Breast epithelium (tissue), 4 donors: ENCODE measurements at regions of chr14 and their contacts with region 1.

Region 1: DNA sequence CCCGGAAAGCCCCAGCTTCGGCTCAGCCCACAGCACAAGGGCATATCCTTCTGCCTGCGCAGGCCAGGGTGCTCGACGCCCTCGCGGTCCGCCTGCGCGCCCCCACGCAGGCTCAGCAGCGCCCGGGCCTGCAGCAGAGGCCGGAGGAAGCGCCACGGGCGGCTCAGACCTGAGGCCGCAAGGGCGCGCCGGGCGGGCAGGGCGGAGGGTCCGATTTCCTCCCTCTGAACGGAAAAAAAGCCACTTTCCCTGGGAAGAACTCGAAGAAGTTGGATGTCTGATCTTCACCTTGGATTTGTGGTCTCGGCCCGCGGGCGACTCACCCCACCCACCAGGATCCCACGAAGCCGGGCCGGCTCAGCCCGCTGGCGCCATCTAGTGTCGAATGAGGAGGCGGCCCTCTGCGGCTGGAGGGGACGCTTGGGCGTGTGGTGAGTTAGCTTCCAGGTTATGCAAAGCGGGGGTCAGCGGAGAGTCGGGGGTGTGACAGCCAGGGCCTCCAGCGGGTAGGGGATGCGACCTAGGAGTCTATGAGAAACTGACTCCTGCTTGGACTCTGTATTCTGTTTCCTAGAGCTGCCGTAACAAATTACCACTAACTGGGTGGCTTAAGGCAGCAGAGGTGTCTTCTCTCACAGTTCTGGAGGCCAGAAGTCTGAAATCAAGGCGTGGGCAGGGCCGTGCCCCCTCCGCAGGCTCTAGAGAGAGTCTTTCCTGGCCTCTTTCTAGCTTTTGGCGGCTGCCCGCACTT is 40.0 kb upstream of the SRSF5 start:
- DNase-seq: peak; percentile 56 to 80
- H3K4me3 ChIP-seq: peak overlapping the region; percentile 33 to 74 (median 49)
- H3K27ac ChIP-seq: peak overlapping the region; percentile 57 to 70
- H3K4me1 ChIP-seq: no peaks in the 10 kb centered on the region
- H3K27me3 ChIP-seq: no peaks in the 10 kb centered on the region
- CTCF ChIP-seq: peak; percentile 95 to 98 (median 97)
- POLR2A ChIP-seq: no peak

Region 2: DNA sequence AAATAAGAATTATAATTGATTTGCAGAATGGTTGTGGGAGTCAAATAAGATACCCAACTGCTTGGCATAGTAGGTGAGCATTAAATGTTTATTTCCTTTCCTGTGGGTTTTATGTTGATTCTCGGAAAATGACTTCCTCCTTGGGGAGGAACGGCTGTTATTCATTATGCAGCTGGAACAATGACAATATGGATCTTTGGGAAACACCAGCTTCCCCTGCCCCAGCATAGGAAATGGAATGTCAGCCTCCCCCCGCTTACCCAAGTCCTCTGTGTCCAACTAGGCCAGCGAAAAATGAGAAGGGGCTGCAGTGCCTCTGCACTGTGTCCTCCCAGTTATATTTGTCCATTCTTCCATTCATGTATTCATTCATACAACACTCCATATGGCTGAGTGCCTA is 140.5 kb before region 1 on chr14:
- intact Hi-C with region 1: loop called (anchors 5 kb)
- DNase-seq: no peak
- H3K4me3 ChIP-seq: no peak overlapping the region
- H3K27ac ChIP-seq: peak overlapping the region in 1 of 2 donors; percentile 25
- H3K4me1 ChIP-seq: no peaks in the 10 kb centered on the region
- H3K27me3 ChIP-seq: no peaks in the 10 kb centered on the region
- CTCF ChIP-seq: no peak
- POLR2A ChIP-seq: no peak

Region 3: GRCh38 chr14:69611201-69612011 is 115.5 kb before region 1 on chr14 and contains the start of gene SUSD6:
- intact Hi-C with region 1: loop called (anchors 5 kb)
- DNase-seq: peak; percentile 88 to 89
- H3K4me3 ChIP-seq: peak within 1 kb of the TSS; percentile 89 to 98 (median 90)
- H3K27ac ChIP-seq: peak within 1 kb of the TSS; percentile 97 to 99
- H3K4me1 ChIP-seq: peaks cover 4 to 27% of the 10 kb centered on the region in 2 donors
- H3K27me3 ChIP-seq: no peaks in the 10 kb centered on the region
- CTCF ChIP-seq: peak in 1 of 3 donors; percentile 7
- POLR2A ChIP-seq: no peak
- total RNA-seq, gene SUSD6: 30.2 to 55.9 (median 55.7) TPM

Region 4: GRCh38 chr14:69715725-69716477 is 11.0 kb before region 1 on chr14:
- intact Hi-C with region 1: no loop called
- DNase-seq: peak; percentile 69 to 91
- H3K4me3 ChIP-seq: no peak overlapping the region
- H3K27ac ChIP-seq: peak overlapping the region; percentile 77 to 91
- H3K4me1 ChIP-seq: peaks cover 20 to 28% of the 10 kb centered on the region in 2 donors
- H3K27me3 ChIP-seq: no peaks in the 10 kb centered on the region
- CTCF ChIP-seq: no peak
- POLR2A ChIP-seq: no peak

Region 5: GRCh38 chr14:69749956-69750355 is 23.0 kb after region 1 on chr14:
- intact Hi-C with region 1: no loop called
- DNase-seq: no peak
- H3K4me3 ChIP-seq: no peak overlapping the region
- H3K27ac ChIP-seq: no peak overlapping the region
- H3K4me1 ChIP-seq: no peaks in the 10 kb centered on the region
- H3K27me3 ChIP-seq: no peaks in the 10 kb centered on the region
- CTCF ChIP-seq: no peak
- POLR2A ChIP-seq: no peak

Region 6: GRCh38 chr14:69766984-69767368 is 40.0 kb after region 1 on chr14 and contains the start of gene SRSF5:
- intact Hi-C with region 1: no loop called
- DNase-seq: peak; percentile 97
- H3K4me3 ChIP-seq: peak within 1 kb of the TSS; percentile 92 to 98 (median 97)
- H3K27ac ChIP-seq: peak within 1 kb of the TSS; percentile 99 to 100
- H3K4me1 ChIP-seq: peaks cover 5 to 15% of the 10 kb centered on the region in 2 donors
- H3K27me3 ChIP-seq: no peaks in the 10 kb centered on the region
- CTCF ChIP-seq: peak in 1 of 3 donors; percentile 21
- POLR2A ChIP-seq: peak; percentile 98
- total RNA-seq, gene SRSF5: 411 to 543 (median 424) TPM